CD8-positive, alpha-beta memory T cell (primary cell): ENCODE measurements at regions of chr1 and their contacts with region 1.

Region 1: DNA sequence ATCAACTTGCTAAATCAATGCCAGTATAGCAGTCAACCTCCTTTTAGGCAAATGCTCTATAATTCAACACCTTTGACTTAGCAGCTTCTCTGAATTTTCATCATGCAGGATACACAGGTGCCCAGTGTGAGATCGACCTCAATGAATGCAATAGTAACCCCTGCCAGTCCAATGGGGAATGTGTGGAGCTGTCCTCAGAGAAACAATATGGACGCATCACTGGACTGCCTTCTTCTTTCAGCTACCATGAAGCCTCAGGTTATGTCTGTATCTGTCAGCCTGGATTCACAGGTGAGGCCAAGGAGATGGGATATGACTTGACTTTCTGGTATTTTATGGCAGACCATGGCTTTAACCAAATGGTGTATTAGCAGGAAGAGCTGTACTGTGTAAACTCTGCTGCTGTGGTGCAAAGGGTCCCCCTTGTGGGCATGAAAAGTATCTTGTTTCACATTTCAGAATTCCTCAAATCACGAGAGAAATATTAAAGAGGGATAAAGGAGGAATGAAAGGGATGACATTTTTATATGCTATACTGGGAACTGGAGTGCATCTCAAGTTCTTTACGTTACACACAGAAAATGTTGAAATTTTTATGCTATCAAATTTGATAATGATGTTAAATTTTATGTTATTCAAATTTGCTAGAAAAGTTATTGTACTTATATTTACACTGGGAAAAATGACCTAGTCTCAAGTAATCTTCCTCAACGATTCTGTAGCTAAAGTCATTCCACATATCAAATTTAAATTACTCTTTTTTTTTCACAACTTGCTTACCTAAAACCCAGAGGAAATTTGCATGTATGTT is 88.9 kb downstream of the CRB1 start:
- DNase-seq: peak in 2 of 5 donors; percentile 15 to 16
- H3K4me3 ChIP-seq: no peak overlapping the region
- H3K4me3 Mint-ChIP-seq: no peak overlapping the region
- H3K27ac ChIP-seq: no peak overlapping the region
- H3K27ac Mint-ChIP-seq: peak overlapping the region in 1 of 8 donors; percentile 74
- H3K4me1 ChIP-seq: no peaks in the 10 kb centered on the region
- H3K4me1 Mint-ChIP-seq: no peaks in the 10 kb centered on the region
- H3K27me3 ChIP-seq: no peaks in the 10 kb centered on the region
- H3K27me3 Mint-ChIP-seq: no peaks in the 10 kb centered on the region

Region 2: DNA sequence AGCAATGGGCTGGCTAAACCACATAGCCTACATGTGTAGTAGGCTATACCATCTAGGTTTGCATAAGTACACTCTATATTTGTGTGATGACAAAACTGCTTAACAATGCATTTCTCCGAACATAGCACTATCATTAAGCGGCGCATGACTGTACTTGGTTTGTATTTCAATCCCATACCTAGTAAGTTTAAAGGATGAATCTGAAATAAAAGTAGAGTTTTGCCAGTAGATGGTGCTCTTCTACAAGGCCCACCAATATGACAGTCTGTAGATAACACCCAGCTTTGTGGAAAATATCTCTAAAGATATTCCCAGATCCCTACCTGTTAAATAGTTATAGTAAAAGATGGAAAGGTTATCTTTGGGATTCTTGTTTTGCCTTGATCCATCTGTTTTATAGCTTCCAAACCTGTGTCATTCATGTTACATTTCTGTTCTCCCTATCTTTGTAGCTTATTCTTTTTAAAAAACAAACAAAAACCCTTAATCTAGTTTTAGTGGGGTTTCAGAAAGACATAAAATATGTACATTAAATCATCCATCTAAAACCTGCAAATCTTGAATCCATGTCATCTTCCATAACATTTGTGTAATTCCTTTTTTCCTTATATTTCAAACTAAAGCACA is 176.6 kb before region 1 on chr1:
- CTCF ChIA-PET with region 1: interaction called, 21 read pairs
- POLR2A ChIA-PET with region 1: no interaction called
- DNase-seq: peak in 2 of 5 donors; percentile 7 to 21
- H3K4me3 ChIP-seq: no peak overlapping the region
- H3K4me3 Mint-ChIP-seq: no peak overlapping the region
- H3K27ac ChIP-seq: no peak overlapping the region
- H3K27ac Mint-ChIP-seq: no peak overlapping the region
- H3K4me1 ChIP-seq: no peaks in the 10 kb centered on the region
- H3K4me1 Mint-ChIP-seq: peaks cover 1 to 18% (median 16%) of the 10 kb centered on the region in 3 donors
- H3K27me3 ChIP-seq: no peaks in the 10 kb centered on the region
- H3K27me3 Mint-ChIP-seq: no peaks in the 10 kb centered on the region

Region 3: GRCh38 chr1:197268012-197268411 is 88.9 kb before region 1 on chr1 and contains the start of gene CRB1:
- CTCF ChIA-PET with region 1: no interaction called
- POLR2A ChIA-PET with region 1: no interaction called
- DNase-seq: no peak
- H3K4me3 ChIP-seq: no peak within 1 kb of the TSS
- H3K4me3 Mint-ChIP-seq: no peak within 1 kb of the TSS
- H3K27ac ChIP-seq: no peak within 1 kb of the TSS
- H3K27ac Mint-ChIP-seq: no peak within 1 kb of the TSS
- H3K4me1 ChIP-seq: no peaks in the 10 kb centered on the region
- H3K4me1 Mint-ChIP-seq: peaks cover 0 to 4% (median 0%) of the 10 kb centered on the region in 3 donors
- H3K27me3 ChIP-seq: no peaks in the 10 kb centered on the region
- H3K27me3 Mint-ChIP-seq: peaks cover 4 to 18% of the 10 kb centered on the region in 2 donors
- total RNA-seq, gene CRB1: 0.26 TPM in 1 of 2 experiments, not detected in the other

Region 4: DNA sequence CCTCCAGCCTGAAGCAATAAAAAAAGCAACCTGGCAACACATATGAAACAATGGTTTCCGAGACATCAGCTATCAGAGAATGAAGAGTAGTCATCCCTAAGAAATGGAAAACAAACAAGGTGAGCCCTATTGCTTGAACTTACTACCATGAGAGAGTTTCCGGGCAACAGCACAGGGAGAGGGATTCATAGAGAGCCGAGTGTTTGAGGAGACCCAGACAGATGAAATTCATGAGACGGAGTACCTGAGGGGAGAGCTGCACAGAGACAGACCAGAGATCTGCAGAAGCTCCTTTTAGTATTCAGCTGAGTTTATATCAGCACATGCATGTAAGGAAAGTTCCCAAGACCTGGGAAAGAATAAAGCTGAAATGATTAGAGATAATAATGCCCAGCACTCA is 69.1 kb before region 1 on chr1:
- CTCF ChIA-PET with region 1: no interaction called
- POLR2A ChIA-PET with region 1: no interaction called
- DNase-seq: no peak
- H3K4me3 ChIP-seq: no peak overlapping the region
- H3K4me3 Mint-ChIP-seq: no peak overlapping the region
- H3K27ac ChIP-seq: no peak overlapping the region
- H3K27ac Mint-ChIP-seq: no peak overlapping the region
- H3K4me1 ChIP-seq: no peaks in the 10 kb centered on the region
- H3K4me1 Mint-ChIP-seq: peaks cover 0 to 4% (median 3%) of the 10 kb centered on the region in 3 donors
- H3K27me3 ChIP-seq: no peaks in the 10 kb centered on the region
- H3K27me3 Mint-ChIP-seq: peaks cover 15 to 17% of the 10 kb centered on the region in 2 donors

Region 5: DNA sequence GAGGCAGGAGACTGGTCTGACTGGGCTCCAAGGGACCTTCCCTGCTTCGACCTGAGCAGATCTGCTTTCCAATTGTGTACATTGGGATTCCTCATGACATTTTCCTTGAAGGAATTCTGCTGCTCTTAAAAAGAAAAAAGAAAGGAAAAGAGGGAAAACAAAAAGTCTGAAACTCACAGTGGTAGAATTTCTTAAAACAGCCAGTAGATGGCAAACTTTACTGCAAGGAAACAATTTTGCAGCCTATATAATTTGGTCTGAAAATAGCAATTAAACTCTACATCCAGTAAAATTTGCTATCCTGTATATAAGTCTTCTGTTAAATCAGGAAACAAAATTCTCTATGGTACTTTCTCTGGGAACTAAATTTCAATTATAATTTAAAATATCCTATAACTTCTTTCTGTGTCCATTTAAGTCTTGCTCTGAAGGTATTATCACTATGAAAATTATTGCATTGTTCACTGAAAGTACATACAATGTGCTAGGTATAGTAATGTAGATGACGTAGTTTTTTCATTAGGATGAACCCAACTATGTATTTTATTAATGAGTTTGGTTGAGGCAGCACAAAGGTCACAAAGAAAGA is 29.1 kb before region 1 on chr1:
- CTCF ChIA-PET with region 1: no interaction called
- POLR2A ChIA-PET with region 1: no interaction called
- DNase-seq: peak in 1 of 5 donors; percentile 12
- H3K4me3 ChIP-seq: no peak overlapping the region
- H3K4me3 Mint-ChIP-seq: no peak overlapping the region
- H3K27ac ChIP-seq: no peak overlapping the region
- H3K27ac Mint-ChIP-seq: no peak overlapping the region
- H3K4me1 ChIP-seq: no peaks in the 10 kb centered on the region
- H3K4me1 Mint-ChIP-seq: no peaks in the 10 kb centered on the region
- H3K27me3 ChIP-seq: no peaks in the 10 kb centered on the region
- H3K27me3 Mint-ChIP-seq: peaks cover 0 to 7% of the 10 kb centered on the region in 2 donors